HepG2 (cell line): ENCODE measurements at regions of chr9 and their contacts with region 1.

Region 1: DNA sequence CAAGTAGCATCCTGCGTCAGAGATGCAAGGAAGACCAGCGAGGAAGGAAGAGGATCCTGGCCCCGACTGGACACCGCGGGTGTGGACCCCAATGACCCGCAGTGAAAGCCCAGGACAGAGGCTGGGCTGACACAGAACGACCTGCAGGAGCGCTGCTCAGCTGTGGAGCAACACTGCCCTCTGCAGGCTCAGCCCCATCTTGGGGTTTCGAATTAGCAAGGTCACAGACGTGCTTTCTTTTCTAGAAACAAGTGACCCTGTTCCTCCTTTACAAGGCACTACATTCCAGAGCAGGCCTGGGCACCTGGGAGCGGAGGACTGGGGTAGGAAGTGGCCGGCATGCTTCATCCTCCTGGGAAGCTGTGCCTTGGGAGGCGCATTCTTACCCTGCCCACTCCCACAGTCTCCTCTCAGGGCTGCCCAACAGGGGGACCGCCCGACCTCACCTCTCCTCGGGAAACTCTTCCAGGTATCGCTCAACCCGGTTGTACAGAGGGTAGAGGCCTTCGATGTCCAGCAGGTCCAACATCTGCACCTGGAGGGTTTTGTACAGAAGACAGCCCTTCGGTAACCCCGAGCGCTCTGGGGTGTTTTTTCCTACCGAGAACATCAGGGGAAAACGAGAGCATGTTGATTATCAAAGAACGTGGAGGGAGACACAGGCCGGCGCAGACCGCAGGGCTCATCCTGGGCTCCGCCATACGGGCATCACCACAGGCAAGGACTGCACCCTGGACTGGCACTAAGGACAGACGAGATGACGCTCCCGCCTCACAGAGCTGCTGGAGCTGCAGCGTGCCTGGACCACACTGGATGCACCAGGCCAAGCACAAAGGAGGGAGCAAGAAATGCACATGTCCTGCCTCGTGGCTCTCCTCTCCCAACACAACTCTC is 35.0 kb downstream of the IPPK start:
- DNase-seq: peak; percentile 55
- ATAC-seq: peak; percentile 97
- H3K4me3 ChIP-seq: no peak overlapping the region
- H3K27ac ChIP-seq: no peak overlapping the region
- H3K4me1 ChIP-seq: no peaks in the 10 kb centered on the region
- H3K27me3 ChIP-seq: no peaks in the 10 kb centered on the region
- CTCF ChIP-seq: peak; percentile 99
- EP300 ChIP-seq: no peak
- POLR2A ChIP-seq: no peak
- RAD21 ChIP-seq: peak; percentile 95

Region 2: DNA sequence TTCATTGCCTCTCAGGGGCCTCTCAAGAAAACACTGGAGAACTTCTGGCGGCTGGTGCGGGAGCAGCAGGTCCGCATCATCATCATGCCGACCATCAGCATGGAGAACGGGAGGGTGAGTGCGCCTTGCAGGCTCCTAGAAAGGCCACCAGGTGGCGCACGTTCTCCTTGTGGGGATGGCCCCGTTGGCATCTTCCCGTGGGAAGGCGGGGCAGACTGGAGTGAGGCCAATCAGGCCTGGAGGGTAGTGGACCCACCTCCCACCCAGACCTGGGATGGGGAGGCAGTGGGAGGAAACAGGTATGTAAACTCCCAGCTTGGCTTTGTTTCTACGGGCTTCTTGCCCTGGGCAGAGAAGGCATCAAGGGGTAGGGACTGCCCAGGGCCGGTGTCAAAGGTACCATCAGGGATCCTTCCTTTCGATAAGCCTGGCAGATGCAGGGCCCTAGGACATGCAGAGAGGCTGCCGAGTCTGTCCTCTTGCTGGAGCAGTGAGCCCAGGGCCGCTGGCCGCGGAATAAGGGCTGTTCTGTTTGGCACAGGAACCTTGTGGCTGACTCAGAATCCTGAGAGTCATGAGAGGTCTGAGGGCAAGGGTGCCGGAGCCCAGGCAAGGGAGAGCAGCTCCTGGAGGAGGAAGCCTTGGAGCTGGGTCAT is 500.9 kb before region 1 on chr9:
- CTCF ChIA-PET with region 1: interaction called, 4 read pairs
- POLR2A ChIA-PET with region 1: no interaction called
- in situ Hi-C with region 1: loop called (anchors 10 kb)
- intact Hi-C with region 1: loop called (anchors 1 kb)
- DNase-seq: peak; percentile 75
- ATAC-seq: peak; percentile 60
- H3K4me3 ChIP-seq: peak overlapping the region in 2 of 3 experiments; percentile 24 to 64; a peak in 5 of 6 replicates
- H3K27ac ChIP-seq: no peak overlapping the region
- H3K4me1 ChIP-seq: peaks cover 22% of the 10 kb centered on the region
- H3K27me3 ChIP-seq: peaks cover 1 to 3% of the 10 kb centered on the region in 2 experiments; a peak in 1 of 5 replicates
- CTCF ChIP-seq: peak; percentile 98
- EP300 ChIP-seq: no peak
- POLR2A ChIP-seq: no peak
- RAD21 ChIP-seq: peak; percentile 84

Region 3: DNA sequence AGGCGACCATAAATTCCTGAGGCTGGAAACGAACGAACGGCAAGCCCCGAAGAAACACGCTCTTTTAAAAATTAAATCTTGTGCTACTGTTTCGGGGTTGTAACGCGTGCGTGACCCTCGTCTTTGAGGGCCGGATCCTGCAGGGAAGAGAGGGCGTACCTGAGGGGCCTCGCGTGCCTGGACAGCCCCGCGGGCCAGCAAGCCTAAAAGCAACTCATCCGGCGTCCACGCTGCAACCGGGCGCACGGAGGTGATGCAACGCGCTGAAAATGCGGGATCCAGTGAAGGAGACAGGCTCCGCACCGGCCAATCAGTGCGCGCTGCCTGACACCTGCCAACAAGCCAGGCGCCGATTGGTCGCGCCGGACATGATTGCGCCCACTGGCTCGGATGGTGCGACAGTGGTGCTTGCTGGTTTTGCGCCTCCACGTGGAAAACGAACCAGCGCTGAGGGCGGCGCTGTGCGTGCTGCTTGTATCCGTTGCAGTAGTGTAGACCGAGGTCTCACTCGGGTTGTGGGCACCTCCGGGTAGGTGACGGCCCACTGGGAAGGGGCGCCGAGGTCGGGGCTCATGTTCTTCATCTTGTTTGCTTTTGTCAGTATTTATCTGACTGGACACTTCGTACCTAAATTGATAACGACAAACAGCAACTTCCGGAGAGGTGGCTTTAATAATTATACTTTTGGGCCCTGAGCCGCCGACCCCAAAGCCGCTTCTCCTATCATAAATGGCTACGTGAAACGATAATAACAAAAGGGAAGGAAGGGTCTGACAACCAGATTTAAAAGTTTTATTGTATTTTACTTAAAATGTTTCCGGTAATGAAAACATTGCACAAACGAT is 341.3 kb before region 1 on chr9 and contains the start of gene IARS1:
- CTCF ChIA-PET with region 1: no interaction called
- POLR2A ChIA-PET with region 1: no interaction called
- in situ Hi-C with region 1: no loop called
- intact Hi-C with region 1: loop called (anchors 2 kb)
- DNase-seq: peak; percentile 96
- ATAC-seq: peak; percentile 96
- H3K4me3 ChIP-seq: peak within 1 kb of the TSS; percentile 78 to 92 (median 82)
- H3K27ac ChIP-seq: peak within 1 kb of the TSS; percentile 85
- H3K4me1 ChIP-seq: peaks cover 36% of the 10 kb centered on the region
- H3K27me3 ChIP-seq: no peaks in the 10 kb centered on the region; a peak in 1 of 5 replicates
- CTCF ChIP-seq: peak; percentile 91
- EP300 ChIP-seq: peak in 1 of 2 experiments; percentile 26; a peak in 1 of 4 replicates
- POLR2A ChIP-seq: peak; percentile 95 to 97
- RAD21 ChIP-seq: no peak
- total RNA-seq, gene IARS1: 185 and 277 TPM in 2 replicates

Region 4: GRCh38 chr9:92325269-92325990 is 309.5 kb before region 1 on chr9 and contains the starts of genes CENPP and NOL8:
- CTCF ChIA-PET with region 1: no interaction called
- POLR2A ChIA-PET with region 1: no interaction called
- in situ Hi-C with region 1: loop called (anchors 10 kb)
- intact Hi-C with region 1: loop called (anchors 2 kb)
- DNase-seq: peak; percentile 86
- ATAC-seq: peak; percentile 95
- H3K4me3 ChIP-seq: peak within 1 kb of the TSS; percentile 74 to 98 (median 93)
- H3K27ac ChIP-seq: peak within 1 kb of the TSS; percentile 96
- H3K4me1 ChIP-seq: peaks cover 40% of the 10 kb centered on the region
- H3K27me3 ChIP-seq: no peaks in the 10 kb centered on the region; a peak in 1 of 5 replicates
- CTCF ChIP-seq: no peak
- EP300 ChIP-seq: 0 out of 4 replicates have a peak, but pooled peaks of 1 of the 2 experiments have one; percentile 24
- POLR2A ChIP-seq: peak; percentile 93
- RAD21 ChIP-seq: no peak; the same call in 1 of the 2 replicates
- total RNA-seq, gene CENPP: 11.0 and 11.4 TPM in 2 replicates
- total RNA-seq, gene NOL8: 35.4 and 36.3 TPM in 2 replicates

Region 5: GRCh38 chr9:92501671-92502393 is 133.1 kb before region 1 on chr9:
- CTCF ChIA-PET with region 1: interaction called, 32 read pairs
- POLR2A ChIA-PET with region 1: no interaction called
- in situ Hi-C with region 1: loop called (anchors 5 kb)
- intact Hi-C with region 1: loop called (anchors 1 kb)
- DNase-seq: peak; percentile 46
- ATAC-seq: peak; percentile 100
- H3K4me3 ChIP-seq: no peak overlapping the region
- H3K27ac ChIP-seq: no peak overlapping the region
- H3K4me1 ChIP-seq: no peaks in the 10 kb centered on the region
- H3K27me3 ChIP-seq: no peaks in the 10 kb centered on the region
- CTCF ChIP-seq: peak; percentile 76
- EP300 ChIP-seq: no peak
- POLR2A ChIP-seq: no peak
- RAD21 ChIP-seq: no peak; the same call in none of the 2 replicates